Natural killer cell (primary cell): ENCODE measurements at regions of chr15 and their contacts with region 1.

Region 1: GRCh38 chr15:40470423-40471104 is at the start of gene CHST14:
- DNase-seq: peak; percentile 56 to 77
- ATAC-seq: peak; percentile 84 to 90 (median 88)
- H3K4me3 ChIP-seq: peak within 1 kb of the TSS; percentile 54
- H3K4me3 Mint-ChIP-seq: peak within 1 kb of the TSS; percentile 89
- H3K27ac ChIP-seq: peak within 1 kb of the TSS; percentile 82
- H3K27ac Mint-ChIP-seq: peak within 1 kb of the TSS; percentile 73 to 89
- H3K4me1 ChIP-seq: peaks cover 21% of the 10 kb centered on the region
- H3K4me1 Mint-ChIP-seq: peaks cover 7 to 14% of the 10 kb centered on the region in 2 donors
- H3K27me3 ChIP-seq: no peaks in the 10 kb centered on the region
- H3K27me3 Mint-ChIP-seq: no peaks in the 10 kb centered on the region
- CTCF ChIP-seq: no peak
- total RNA-seq, gene CHST14: 9.8 to 16.7 (median 12.9) TPM

Region 2: GRCh38 chr15:40454904-40455391 is 15.6 kb before region 1 on chr15:
- intact Hi-C with region 1: loop called (anchors 2 kb)
- DNase-seq: no peak
- ATAC-seq: peak in 1 of 3 donors; percentile 41
- H3K4me3 ChIP-seq: no peak overlapping the region
- H3K4me3 Mint-ChIP-seq: peak overlapping the region; percentile 37
- H3K27ac ChIP-seq: peak overlapping the region; percentile 69
- H3K27ac Mint-ChIP-seq: peak overlapping the region; percentile 80 to 89
- H3K4me1 ChIP-seq: peaks cover 62% of the 10 kb centered on the region
- H3K4me1 Mint-ChIP-seq: peaks cover 69 to 74% of the 10 kb centered on the region in 2 donors
- H3K27me3 ChIP-seq: no peaks in the 10 kb centered on the region
- H3K27me3 Mint-ChIP-seq: no peaks in the 10 kb centered on the region
- CTCF ChIP-seq: no peak